ENCODE measurements at regions of chr6 and their contacts with region 1.

Region 1: GRCh38 chr6:72411872-72412708 is 209.8 kb upstream of the KCNQ5 start:
- DNase-seq: peak; percentile 85 to 86 (median 85)
- ATAC-seq: peak; percentile 87
- H3K4me3 ChIP-seq: no peak overlapping the region
- H3K27ac ChIP-seq: no peak overlapping the region
- H3K4me1 ChIP-seq: peaks cover 3 to 8% of the 10 kb centered on the region in 2 experiments; a peak in 3 of 5 replicates
- H3K27me3 ChIP-seq: no peaks in the 10 kb centered on the region
- CTCF ChIP-seq: peak; percentile 100
- EP300 ChIP-seq: no peak
- POLR2A ChIP-seq: no peak
- RAD21 ChIP-seq: peak; percentile 100

Region 2: GRCh38 chr6:72401865-72402264 is 10.2 kb before region 1 on chr6:
- CTCF ChIA-PET with region 1: no interaction called
- POLR2A ChIA-PET with region 1: no interaction called
- in situ Hi-C with region 1: no loop called
- intact Hi-C with region 1: no loop called
- DNase-seq: no peak
- ATAC-seq: no peak
- H3K4me3 ChIP-seq: no peak overlapping the region
- H3K27ac ChIP-seq: no peak overlapping the region
- H3K4me1 ChIP-seq: no peaks in the 10 kb centered on the region
- H3K27me3 ChIP-seq: no peaks in the 10 kb centered on the region
- CTCF ChIP-seq: no peak
- EP300 ChIP-seq: no peak
- POLR2A ChIP-seq: no peak
- RAD21 ChIP-seq: no peak

Region 3: GRCh38 chr6:72560721-72561593 is 148.9 kb after region 1 on chr6:
- CTCF ChIA-PET with region 1: interaction called, 3 read pairs
- POLR2A ChIA-PET with region 1: interaction called, 3 read pairs
- in situ Hi-C with region 1: no loop called
- intact Hi-C with region 1: loop called (anchors 2 kb)
- DNase-seq: peak; percentile 60 to 98 (median 73)
- ATAC-seq: peak; percentile 91
- H3K4me3 ChIP-seq: peak overlapping the region; percentile 30
- H3K27ac ChIP-seq: peak overlapping the region; percentile 98
- H3K4me1 ChIP-seq: peaks cover 3 to 27% of the 10 kb centered on the region in 2 experiments
- H3K27me3 ChIP-seq: no peaks in the 10 kb centered on the region
- CTCF ChIP-seq: peak in 2 of 3 experiments; percentile 42 to 61; a peak in 4 of 6 replicates
- EP300 ChIP-seq: peak; percentile 96
- POLR2A ChIP-seq: peak; percentile 73
- RAD21 ChIP-seq: peak; percentile 6 to 19; a peak in 2 of 4 replicates

Region 4: DNA sequence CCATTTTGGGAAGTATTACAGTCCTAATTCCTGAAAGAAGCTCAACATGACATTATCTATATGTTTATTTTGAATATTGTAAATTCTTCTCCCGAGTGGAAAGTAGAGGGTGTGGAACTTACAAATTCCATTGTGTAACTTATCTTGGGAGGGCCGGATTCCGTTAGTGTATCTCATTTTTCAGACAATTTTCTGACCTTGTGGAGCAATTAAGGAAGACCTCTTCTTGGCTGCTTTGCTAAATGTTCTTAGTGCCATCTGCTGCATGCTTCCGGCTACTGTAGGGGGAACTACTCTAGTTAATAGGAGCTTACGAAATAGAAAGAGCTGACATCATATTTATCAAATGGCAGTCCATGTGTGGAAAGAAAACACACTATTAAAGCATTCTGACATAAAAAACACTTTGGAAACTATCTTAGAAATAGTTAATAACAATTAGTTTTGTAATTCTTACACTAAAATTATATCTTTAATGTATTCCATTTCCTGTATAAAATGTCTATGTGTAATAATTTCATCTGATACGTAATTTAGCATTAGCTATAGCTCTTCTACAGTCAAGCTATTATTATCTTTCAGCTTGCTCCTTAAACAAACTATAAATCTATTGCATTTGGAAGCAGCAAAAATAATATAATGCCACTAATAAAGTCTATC is 168.3 kb after region 1 on chr6:
- CTCF ChIA-PET with region 1: interaction called, 146 read pairs
- POLR2A ChIA-PET with region 1: interaction called, 8 read pairs
- in situ Hi-C with region 1: loop called (anchors 5 kb)
- intact Hi-C with region 1: loop called (anchors 1 kb)
- DNase-seq: peak; percentile 44 to 88 (median 64)
- ATAC-seq: peak; percentile 99
- H3K4me3 ChIP-seq: no peak overlapping the region
- H3K27ac ChIP-seq: peak overlapping the region; percentile 24; the same call in 2 of the 3 replicates
- H3K4me1 ChIP-seq: no peaks in the 10 kb centered on the region; a peak in 1 of 5 replicates
- H3K27me3 ChIP-seq: no peaks in the 10 kb centered on the region
- CTCF ChIP-seq: peak; percentile 82 to 98 (median 95)
- EP300 ChIP-seq: no peak
- POLR2A ChIP-seq: no peak
- RAD21 ChIP-seq: peak; percentile 100

Region 5: GRCh38 chr6:73116330-73116729 is 704.2 kb after region 1 on chr6:
- CTCF ChIA-PET with region 1: no interaction called
- POLR2A ChIA-PET with region 1: no interaction called
- in situ Hi-C with region 1: loop called (anchors 5 kb)
- intact Hi-C with region 1: no loop called
- DNase-seq: no peak
- ATAC-seq: no peak
- H3K4me3 ChIP-seq: no peak overlapping the region
- H3K27ac ChIP-seq: no peak overlapping the region
- H3K4me1 ChIP-seq: no peaks in the 10 kb centered on the region
- H3K27me3 ChIP-seq: no peaks in the 10 kb centered on the region
- CTCF ChIP-seq: no peak
- EP300 ChIP-seq: no peak
- POLR2A ChIP-seq: no peak
- RAD21 ChIP-seq: no peak

Region 6: GRCh38 chr6:73129653-73130443 is 717.8 kb after region 1 on chr6:
- CTCF ChIA-PET with region 1: interaction called, 24 read pairs
- POLR2A ChIA-PET with region 1: no interaction called
- in situ Hi-C with region 1: no loop called
- intact Hi-C with region 1: loop called (anchors 2 kb)
- DNase-seq: peak; percentile 66 to 86 (median 70)
- ATAC-seq: peak; percentile 99
- H3K4me3 ChIP-seq: no peak overlapping the region
- H3K27ac ChIP-seq: no peak overlapping the region
- H3K4me1 ChIP-seq: no peaks in the 10 kb centered on the region; a peak in 1 of 5 replicates
- H3K27me3 ChIP-seq: no peaks in the 10 kb centered on the region
- CTCF ChIP-seq: peak; percentile 96 to 98 (median 98)
- EP300 ChIP-seq: no peak
- POLR2A ChIP-seq: no peak
- RAD21 ChIP-seq: peak; percentile 92 to 94

Region 7: DNA sequence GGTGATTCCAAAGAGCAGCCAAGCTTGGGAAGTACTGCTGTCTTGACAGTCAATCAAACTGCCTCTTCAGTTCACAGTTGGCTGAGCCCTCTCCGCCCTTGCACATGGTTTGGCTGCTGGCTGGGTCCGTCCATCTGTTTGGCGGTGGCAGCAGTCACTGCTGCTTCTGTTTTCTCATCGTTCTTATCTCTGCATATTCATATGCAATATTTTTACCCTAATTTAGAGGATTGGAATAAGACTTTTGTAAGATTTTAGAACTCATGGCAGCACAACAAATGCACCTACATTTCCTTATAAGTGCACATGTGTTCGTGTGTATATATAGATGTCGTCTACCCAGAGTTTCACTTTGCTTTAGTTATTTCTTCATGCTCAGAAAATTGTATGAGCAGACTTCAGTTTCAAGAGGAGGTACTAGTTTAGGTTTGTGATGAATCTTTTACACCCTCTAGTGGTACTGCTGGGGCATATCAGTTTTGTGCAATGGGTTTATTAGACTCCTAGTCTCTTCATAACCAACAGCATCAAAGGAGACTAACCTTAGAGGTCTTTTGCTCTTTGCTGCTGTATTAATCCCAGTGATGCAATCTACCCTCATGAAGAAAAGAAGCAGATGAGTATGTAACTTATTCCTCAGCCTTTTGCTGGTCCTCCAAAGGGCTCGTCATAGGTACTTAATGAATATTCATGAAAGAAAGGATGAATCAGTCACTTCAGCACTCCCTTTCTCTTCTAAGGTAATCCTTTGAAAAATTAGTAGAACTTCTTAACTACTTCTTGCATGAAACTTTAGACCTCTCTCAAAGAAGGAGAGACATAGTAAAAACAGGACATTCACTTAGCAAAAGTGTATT is 768.9 kb after region 1 on chr6:
- CTCF ChIA-PET with region 1: interaction called, 9 read pairs
- POLR2A ChIA-PET with region 1: no interaction called
- in situ Hi-C with region 1: no loop called
- intact Hi-C with region 1: loop called (anchors 5 kb)
- DNase-seq: peak; percentile 30 to 55 (median 42)
- ATAC-seq: peak; percentile 96
- H3K4me3 ChIP-seq: no peak overlapping the region
- H3K27ac ChIP-seq: no peak overlapping the region
- H3K4me1 ChIP-seq: no peaks in the 10 kb centered on the region; a peak in 1 of 5 replicates
- H3K27me3 ChIP-seq: no peaks in the 10 kb centered on the region
- CTCF ChIP-seq: peak; percentile 59 to 85 (median 80); a peak in 5 of 6 replicates
- EP300 ChIP-seq: no peak
- POLR2A ChIP-seq: no peak
- RAD21 ChIP-seq: peak; percentile 85 to 91

Measured in K562 (cell line).